Cardiac septum (tissue), 1 donor: ENCODE measurements at regions of chr1 and their contacts with region 1.

Region 1: GRCh38 chr1:31938174-31938950 is at the start of gene PTP4A2:
- DNase-seq: peak; percentile 98
- total RNA-seq, gene PTP4A2: 216 TPM

Region 2: GRCh38 chr1:31576201-31576669 is 362.1 kb before region 1 on chr1 and contains the start of gene TINAGL1:
- intact Hi-C with region 1: loop called (anchors 10 kb)
- DNase-seq: peak; percentile 87
- total RNA-seq, gene TINAGL1: 180 TPM

Region 3: DNA sequence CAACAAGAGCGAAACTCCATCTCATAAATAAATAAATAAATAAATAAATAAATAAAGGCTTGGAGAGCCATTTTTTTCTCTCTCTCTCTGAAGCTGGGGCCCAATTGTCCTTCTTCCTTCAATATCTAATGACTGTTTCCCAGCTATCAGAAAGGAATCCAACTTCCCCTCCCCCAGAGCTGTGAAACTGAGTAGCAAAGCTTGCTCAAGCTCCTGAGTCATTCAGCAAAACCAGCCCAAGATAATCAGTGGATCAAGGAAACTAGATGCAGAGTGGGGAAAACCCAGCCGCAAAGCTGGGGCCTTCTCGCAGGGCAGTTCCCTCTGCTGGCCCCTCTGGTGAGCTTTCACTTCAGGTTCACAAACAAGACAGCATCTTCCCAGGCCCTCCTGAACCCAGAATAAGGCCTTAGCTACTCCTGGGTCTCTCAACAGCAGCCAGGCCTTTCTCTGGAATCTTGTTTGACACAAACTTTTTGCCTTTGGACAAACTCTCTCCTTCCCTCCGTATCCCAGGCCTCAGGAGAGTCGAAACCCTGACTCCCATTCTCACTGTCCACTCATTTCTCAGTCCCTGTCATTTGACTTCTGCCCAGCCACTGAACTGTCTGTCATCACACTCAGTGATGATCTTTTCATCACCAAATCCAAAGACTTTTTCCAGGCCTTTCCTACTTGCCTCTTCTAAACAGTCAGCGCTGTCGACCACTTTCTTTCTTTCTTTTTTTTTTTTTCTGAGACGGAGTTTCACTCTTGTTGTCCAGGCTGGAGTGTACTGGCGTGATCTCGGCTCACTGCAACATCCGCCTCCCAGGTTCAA is 17.8 kb after region 1 on chr1:
- intact Hi-C with region 1: loop called (anchors 2 kb)
- DNase-seq: peak; percentile 86

Region 4: GRCh38 chr1:32013386-32014198 is 75.2 kb after region 1 on chr1 and contains the start of gene KHDRBS1:
- intact Hi-C with region 1: loop called (anchors 5 kb)
- DNase-seq: peak; percentile 99
- total RNA-seq, gene KHDRBS1: 73.1 TPM

Region 5: GRCh38 chr1:32025515-32025914 is 87.2 kb after region 1 on chr1:
- intact Hi-C with region 1: no loop called
- DNase-seq: no peak